ENCODE measurements at regions of chr16 and their contacts with region 1.

Region 1: DNA sequence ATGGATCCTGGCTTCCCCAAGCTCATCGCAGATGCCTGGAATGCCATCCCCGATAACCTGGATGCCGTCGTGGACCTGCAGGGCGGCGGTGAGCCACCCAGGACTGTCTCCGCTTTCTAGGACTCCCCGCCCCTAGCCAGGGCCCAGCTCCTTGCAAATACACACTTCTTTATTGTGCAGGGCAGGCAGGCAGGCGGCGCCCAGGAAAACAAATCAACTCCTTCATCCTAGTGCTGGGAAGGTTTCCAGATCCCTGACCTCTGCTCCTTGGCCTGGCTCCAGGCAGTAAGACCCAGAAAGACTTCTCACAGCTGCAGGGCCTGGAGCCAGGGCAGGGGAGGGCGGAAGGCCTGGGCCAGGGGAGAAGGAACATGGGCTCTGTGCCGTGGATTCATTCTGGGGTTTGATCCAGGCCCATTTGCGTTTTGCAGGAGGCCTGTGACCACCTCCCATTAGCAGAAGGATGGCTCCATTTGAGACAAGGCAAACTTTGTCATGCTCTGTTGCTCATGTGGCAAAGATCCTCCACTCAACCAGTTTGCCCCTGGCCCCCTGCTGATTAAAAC is 6.0 kb upstream of the LPCAT2 start:
- DNase-seq: no peak
- H3K4me3 ChIP-seq: no peak overlapping the region
- H3K27ac ChIP-seq: no peak overlapping the region
- H3K4me1 ChIP-seq: 0 out of 7 replicates have a peak, but pooled peaks cover 0 to 2% (median 0%) of the 10 kb centered on the region in 4 experiments
- H3K27me3 ChIP-seq: no peaks in the 10 kb centered on the region
- CTCF ChIP-seq: no peak
- EP300 ChIP-seq: no peak
- POLR2A ChIP-seq: no peak
- RAD21 ChIP-seq: no peak

Region 2: DNA sequence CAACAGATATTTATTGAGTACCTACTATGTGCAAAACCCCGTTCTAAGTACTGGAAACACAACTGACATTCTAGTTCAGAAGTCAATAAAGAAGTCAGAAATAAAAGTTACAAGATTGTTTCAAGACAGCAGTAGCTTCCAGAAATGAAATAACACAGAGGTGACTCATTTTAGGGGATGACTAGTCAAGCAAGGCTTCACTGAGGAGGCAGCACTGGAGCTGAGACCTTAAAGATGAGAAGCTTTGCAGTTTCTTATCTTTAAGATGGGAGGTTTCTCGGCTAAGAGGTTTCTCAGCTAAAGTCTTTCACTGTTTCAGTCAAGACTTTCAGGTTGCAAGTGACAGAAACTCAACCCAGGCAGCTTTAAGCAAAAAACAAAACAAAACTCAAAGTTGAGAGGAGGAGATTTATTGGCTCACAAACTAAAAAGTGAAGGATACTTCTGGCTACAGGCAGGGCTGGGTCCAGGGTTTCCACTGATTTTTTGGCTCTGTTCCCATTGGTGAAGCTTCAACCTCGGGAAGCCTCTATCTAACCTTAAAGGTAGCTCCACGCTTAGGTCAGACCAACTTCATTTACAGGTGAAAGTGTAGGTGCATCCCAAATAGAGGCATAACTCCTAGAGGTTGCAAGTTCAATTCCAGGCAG is 31.3 kb before region 1 on chr16:
- CTCF ChIA-PET with region 1: interaction called, 15 read pairs
- POLR2A ChIA-PET with region 1: no interaction called
- DNase-seq: no peak
- H3K4me3 ChIP-seq: no peak overlapping the region
- H3K27ac ChIP-seq: no peak overlapping the region
- H3K4me1 ChIP-seq: peaks cover 0 to 4% (median 2%) of the 10 kb centered on the region in 4 experiments; a peak in 5 of 7 replicates
- H3K27me3 ChIP-seq: peaks cover 0 to 6% (median 2%) of the 10 kb centered on the region in 4 experiments; a peak in 6 of 7 replicates
- CTCF ChIP-seq: no peak
- EP300 ChIP-seq: no peak
- POLR2A ChIP-seq: no peak
- RAD21 ChIP-seq: no peak

Region 3: GRCh38 chr16:55487048-55487803 is 15.7 kb before region 1 on chr16:
- CTCF ChIA-PET with region 1: interaction called, 39 read pairs
- POLR2A ChIA-PET with region 1: interaction called, 5 read pairs
- DNase-seq: no peak
- H3K4me3 ChIP-seq: no peak overlapping the region
- H3K27ac ChIP-seq: no peak overlapping the region
- H3K4me1 ChIP-seq: no peaks in the 10 kb centered on the region; a peak in 1 of 7 replicates
- H3K27me3 ChIP-seq: no peaks in the 10 kb centered on the region
- CTCF ChIP-seq: no peak
- EP300 ChIP-seq: no peak
- POLR2A ChIP-seq: no peak
- RAD21 ChIP-seq: no peak

Region 4: DNA sequence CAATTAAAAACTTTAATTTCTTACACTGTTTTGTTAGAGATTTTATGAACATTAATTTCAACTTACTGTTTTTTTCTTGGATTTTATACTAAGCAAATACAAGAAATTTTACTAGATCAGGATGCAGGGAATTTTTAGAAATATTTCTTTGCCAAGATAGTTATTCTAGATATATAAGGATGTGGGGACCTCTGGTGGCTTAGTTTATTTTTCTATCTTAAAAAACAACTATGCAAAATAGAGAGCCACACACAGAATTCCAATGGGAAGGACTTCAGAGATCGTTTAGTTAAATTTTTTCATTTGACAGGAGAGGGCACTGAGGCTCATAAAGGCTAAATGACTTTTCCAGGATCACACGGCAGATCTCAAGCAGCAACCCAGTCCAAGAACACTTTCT is 40.6 kb after region 1 on chr16:
- CTCF ChIA-PET with region 1: interaction called, 14 read pairs
- POLR2A ChIA-PET with region 1: no interaction called
- DNase-seq: no peak
- H3K4me3 ChIP-seq: no peak overlapping the region
- H3K27ac ChIP-seq: no peak overlapping the region
- H3K4me1 ChIP-seq: no peaks in the 10 kb centered on the region
- H3K27me3 ChIP-seq: no peaks in the 10 kb centered on the region; a peak in 1 of 7 replicates
- CTCF ChIP-seq: peak in 1 of 3 experiments; percentile 27; a peak in 1 of 4 replicates
- EP300 ChIP-seq: no peak
- POLR2A ChIP-seq: no peak
- RAD21 ChIP-seq: peak; percentile 40 to 47

Region 5: DNA sequence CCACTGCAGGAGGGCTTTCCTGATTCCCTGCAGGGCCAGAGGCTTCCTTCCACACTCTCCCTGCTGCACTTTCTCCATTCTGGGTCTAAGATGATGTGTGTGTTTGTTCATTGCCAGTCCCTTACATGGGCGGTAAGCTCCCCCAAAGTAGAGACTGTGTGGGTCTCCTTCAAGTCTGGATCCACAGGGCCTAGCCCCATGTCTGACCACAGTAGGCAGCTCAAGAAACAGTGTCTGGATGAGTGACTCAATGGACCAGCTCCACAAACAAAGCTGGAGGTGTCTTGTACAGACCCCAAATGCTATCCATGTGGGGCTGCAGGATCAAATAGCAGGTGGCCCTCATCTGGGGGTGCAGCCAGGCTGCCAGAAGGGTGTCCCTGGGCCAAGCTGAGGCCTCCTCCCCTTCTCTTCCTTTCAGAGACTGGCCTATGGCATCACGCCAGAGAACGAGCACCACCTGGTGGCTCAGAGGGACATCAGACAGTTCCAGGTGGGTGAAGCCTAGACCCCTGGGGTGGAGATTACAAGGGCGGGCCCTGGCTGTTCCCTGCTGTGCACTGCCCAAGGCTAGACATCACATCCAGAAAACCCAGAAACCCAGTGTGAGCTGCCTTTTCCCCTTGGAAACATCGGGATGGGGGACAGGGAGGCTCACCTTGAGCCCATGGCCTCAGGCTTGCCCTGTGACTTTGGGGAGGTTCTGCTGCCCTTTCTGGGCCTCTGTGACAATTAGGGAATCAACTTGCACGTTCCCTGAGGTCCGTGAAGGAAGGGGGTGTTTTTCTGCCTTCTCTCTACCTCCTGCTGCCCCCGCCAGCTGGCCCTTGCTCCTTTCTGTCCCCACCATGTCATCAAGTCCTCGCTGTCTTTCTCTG is 198.8 kb after region 1 on chr16:
- CTCF ChIA-PET with region 1: interaction called, 12 read pairs
- POLR2A ChIA-PET with region 1: no interaction called
- DNase-seq: peak in 1 of 2 experiments; percentile 73
- H3K4me3 ChIP-seq: no peak overlapping the region
- H3K27ac ChIP-seq: no peak overlapping the region
- H3K4me1 ChIP-seq: peaks cover 0 to 9% (median 3%) of the 10 kb centered on the region in 4 experiments; a peak in 4 of 7 replicates
- H3K27me3 ChIP-seq: no peaks in the 10 kb centered on the region
- CTCF ChIP-seq: peak; percentile 75 to 86 (median 79)
- EP300 ChIP-seq: no peak
- POLR2A ChIP-seq: no peak
- RAD21 ChIP-seq: peak; percentile 85 to 91

Measured in H1 (cell line).